ENCODE measurements at regions of chr5 and their contacts with region 1.

Region 1: DNA sequence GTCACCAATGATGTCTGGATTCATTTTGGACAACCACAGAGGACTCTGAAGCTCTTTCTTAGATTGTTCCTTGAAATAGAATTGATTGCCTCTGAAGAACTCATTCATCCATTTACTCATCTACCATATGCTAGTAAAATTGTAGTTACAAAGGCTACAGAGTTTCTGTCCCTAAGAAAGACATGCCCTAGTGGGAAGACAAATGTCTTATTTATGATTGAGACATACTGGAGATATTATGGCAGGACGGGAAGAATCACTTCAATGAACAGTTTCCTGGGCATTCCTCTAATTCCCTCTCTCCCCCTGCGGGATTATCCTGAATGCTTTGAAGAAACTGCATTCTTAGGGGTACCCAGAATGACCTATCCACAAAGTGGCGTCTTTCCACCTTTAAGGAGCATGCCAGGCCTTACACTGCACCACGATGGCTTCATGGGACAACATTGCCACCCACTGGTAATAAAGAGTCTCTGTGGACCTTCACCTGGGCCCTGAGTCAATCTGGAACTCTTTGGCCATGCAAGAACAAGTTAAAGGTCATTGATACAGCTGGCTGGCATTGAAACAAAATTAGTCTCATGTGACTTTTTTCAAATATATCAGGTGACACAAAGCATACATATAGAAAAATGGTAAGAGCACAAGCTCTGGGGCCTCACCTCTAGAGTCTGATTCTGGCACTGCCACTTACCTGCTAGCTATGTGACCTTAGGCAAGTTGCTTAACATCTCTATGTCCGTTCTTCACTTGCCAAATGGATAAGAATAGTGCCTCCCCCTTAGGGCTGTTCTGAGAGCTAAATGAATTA is 32.1 kb downstream of the ANKRD55 start:
- DNase-seq: peak in 4 of 5 donors; percentile 47 to 69 (median 54)
- ATAC-seq: peak; percentile 91 to 99 (median 98)
- H3K4me3 ChIP-seq: no peak overlapping the region
- H3K27ac ChIP-seq: no peak overlapping the region
- H3K4me1 ChIP-seq: peaks cover 0 to 19% (median 0%) of the 10 kb centered on the region in 12 donors
- H3K27me3 ChIP-seq: no peaks in the 10 kb centered on the region
- CTCF ChIP-seq: peak; percentile 65 to 92 (median 78)
- POLR2A ChIP-seq: no peak

Region 2: GRCh38 chr5:55324815-55325418 is 876.1 kb before region 1 on chr5:
- intact Hi-C with region 1: loop called in 1 of 10 experiments (anchors 10 kb)
- DNase-seq: no peak
- ATAC-seq: peak in 1 of 4 donors; percentile 24
- H3K4me3 ChIP-seq: no peak overlapping the region
- H3K27ac ChIP-seq: no peak overlapping the region
- H3K4me1 ChIP-seq: peaks cover 0 to 9% (median 7%) of the 10 kb centered on the region in 12 donors
- H3K27me3 ChIP-seq: no peaks in the 10 kb centered on the region
- CTCF ChIP-seq: peak; percentile 38 to 66 (median 52)
- POLR2A ChIP-seq: no peak

Region 3: DNA sequence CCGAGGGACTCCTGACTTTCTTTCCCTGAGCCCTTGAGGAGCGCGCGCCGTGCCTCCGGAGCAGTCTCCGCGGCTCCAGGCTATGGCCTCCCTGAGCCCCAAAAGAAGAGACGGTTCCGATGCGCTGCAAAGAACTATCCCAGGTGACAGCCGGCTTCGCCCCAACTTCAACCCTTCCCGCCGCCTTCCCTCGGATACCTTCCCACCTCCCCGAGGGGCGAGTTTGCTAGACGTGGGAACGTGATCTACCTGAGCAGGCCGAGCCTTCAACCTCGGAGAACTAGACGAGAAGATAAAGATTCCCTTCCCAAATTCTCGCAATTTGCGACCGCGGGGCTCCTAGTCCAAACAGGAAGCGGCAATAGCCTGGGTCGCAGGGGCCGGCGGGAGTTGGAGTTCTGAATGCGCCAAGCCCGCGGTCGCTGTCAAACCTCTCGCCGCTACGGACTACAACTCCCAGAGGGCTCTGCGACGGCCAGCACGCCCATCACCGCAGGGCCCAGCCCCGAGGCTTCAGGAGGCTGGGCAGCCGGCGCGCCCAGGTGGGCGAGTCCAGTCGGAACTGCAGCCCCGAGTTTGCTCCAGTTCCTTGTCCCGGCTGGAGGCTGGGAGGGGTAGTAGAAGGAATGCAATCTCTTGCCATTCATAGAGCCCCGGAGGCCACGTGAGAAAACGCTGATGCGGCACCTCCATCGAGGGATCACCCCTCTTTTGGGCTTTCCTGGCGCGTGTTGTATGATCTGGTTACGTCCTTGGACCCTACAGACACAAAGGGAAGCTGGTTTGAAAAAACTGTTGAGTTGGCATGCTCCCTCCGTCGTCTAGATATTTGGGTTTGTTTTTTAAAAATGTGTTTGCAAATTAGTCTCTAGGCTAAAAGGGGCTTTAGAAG is 488.8 kb before region 1 on chr5 and contains the start of gene SLC38A9:
- intact Hi-C with region 1: loop called in 7 of 10 experiments (anchors 5 to 10 kb)
- DNase-seq: peak; percentile 96 to 97 (median 97)
- ATAC-seq: peak; percentile 100
- H3K4me3 ChIP-seq: peak within 1 kb of the TSS; percentile 56 to 97 (median 90)
- H3K27ac ChIP-seq: peak within 1 kb of the TSS in 11 of 12 donors; percentile 13 to 80 (median 65)
- H3K4me1 ChIP-seq: peaks cover 0 to 26% (median 7%) of the 10 kb centered on the region in 12 donors
- H3K27me3 ChIP-seq: no peaks in the 10 kb centered on the region
- CTCF ChIP-seq: no peak
- POLR2A ChIP-seq: peak in 1 of 2 donors; percentile 67
- total RNA-seq, gene SLC38A9: 3.9 to 13.5 (median 7.3) TPM

Region 4: GRCh38 chr5:55885359-55885758 is 315.7 kb before region 1 on chr5:
- intact Hi-C with region 1: no loop called
- DNase-seq: no peak
- ATAC-seq: no peak
- H3K4me3 ChIP-seq: no peak overlapping the region
- H3K27ac ChIP-seq: no peak overlapping the region
- H3K4me1 ChIP-seq: no peaks in the 10 kb centered on the region
- H3K27me3 ChIP-seq: no peaks in the 10 kb centered on the region
- CTCF ChIP-seq: no peak
- POLR2A ChIP-seq: no peak

Region 5: GRCh38 chr5:55982957-55983381 is 218.1 kb before region 1 on chr5:
- intact Hi-C with region 1: loop called in 6 of 10 experiments (anchors 2 to 5 kb)
- DNase-seq: no peak
- ATAC-seq: peak; percentile 31 to 65 (median 46)
- H3K4me3 ChIP-seq: no peak overlapping the region
- H3K27ac ChIP-seq: no peak overlapping the region
- H3K4me1 ChIP-seq: peaks cover 6 to 81% (median 33%) of the 10 kb centered on the region in 12 donors
- H3K27me3 ChIP-seq: no peaks in the 10 kb centered on the region
- CTCF ChIP-seq: peak in 7 of 12 donors; percentile 9 to 52 (median 28)
- POLR2A ChIP-seq: no peak